Activated CD4-positive, alpha-beta T cell treated with anti-CD3 and anti-CD28 coated beads, Interleukin-2, amount 10 ng/mL, durations not matched to agents 7 days and 5 days (primary cell): ENCODE measurements at regions of chr2 and their contacts with region 1.

Region 1: GRCh38 chr2:6865346-6866274 is at the start of gene CMPK2:
- DNase-seq: peak; percentile 93
- H3K4me3 Mint-ChIP-seq: peak within 1 kb of the TSS; percentile 96
- H3K27ac Mint-ChIP-seq: peak within 1 kb of the TSS; percentile 100
- H3K4me1 Mint-ChIP-seq: peaks cover 65% of the 10 kb centered on the region
- H3K27me3 Mint-ChIP-seq: no peaks in the 10 kb centered on the region
- total RNA-seq, gene CMPK2: 94.3 to 96.0 TPM

Region 2: GRCh38 chr2:6846967-6847681 is 18.5 kb before region 1 on chr2:
- CTCF ChIA-PET with region 1: interaction called, 21 read pairs
- POLR2A ChIA-PET with region 1: no interaction called
- DNase-seq: no peak
- H3K4me3 Mint-ChIP-seq: no peak overlapping the region
- H3K27ac Mint-ChIP-seq: no peak overlapping the region
- H3K4me1 Mint-ChIP-seq: peaks cover 34% of the 10 kb centered on the region
- H3K27me3 Mint-ChIP-seq: no peaks in the 10 kb centered on the region

Region 3: DNA sequence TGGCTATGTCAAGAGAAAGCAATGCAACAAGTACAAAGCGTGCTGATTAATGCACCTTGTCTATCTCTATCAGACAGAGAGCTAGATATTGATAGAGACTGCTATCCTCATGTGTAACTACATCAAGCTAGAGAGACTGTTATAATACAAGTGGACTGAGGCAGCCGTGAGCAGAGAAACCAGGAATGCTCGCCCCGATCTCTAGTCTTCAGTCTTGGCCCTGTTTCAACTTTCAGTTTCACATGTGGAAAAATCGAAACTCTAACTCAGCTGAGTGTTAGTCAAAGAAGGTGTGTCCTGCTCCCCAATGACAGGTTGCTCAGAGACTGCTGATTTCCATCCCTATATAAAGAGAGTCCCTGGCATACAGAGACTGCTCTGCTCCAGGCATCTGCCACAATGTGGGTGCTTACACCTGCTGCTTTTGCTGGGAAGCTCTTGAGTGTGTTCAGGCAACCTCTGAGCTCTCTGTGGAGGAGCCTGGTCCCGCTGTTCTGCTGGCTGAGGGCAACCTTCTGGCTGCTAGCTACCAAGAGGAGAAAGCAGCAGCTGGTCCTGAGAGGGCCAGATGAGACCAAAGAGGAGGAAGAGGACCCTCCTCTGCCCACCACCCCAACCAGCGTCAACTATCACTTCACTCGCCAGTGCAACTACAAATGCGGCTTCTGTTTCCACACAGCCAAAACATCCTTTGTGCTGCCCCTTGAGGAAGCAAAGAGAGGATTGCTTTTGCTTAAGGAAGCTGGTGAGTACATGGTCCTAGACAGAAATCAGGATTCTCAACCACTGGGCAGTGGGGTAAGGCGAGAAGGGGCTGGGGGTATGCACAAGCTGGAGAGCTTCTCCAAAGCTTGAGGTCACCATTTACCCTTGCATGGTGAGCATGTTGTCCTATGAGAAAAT is 12.0 kb after region 1 on chr2 and contains the start of gene RSAD2:
- CTCF ChIA-PET with region 1: interaction called, 58 read pairs
- POLR2A ChIA-PET with region 1: interaction called, 69 read pairs
- DNase-seq: peak; percentile 74
- H3K4me3 Mint-ChIP-seq: peak within 1 kb of the TSS; percentile 99
- H3K27ac Mint-ChIP-seq: peak within 1 kb of the TSS; percentile 94
- H3K4me1 Mint-ChIP-seq: peaks cover 58% of the 10 kb centered on the region
- H3K27me3 Mint-ChIP-seq: no peaks in the 10 kb centered on the region
- total RNA-seq, gene RSAD2: 100 to 101 TPM